ENCODE measurements at regions of chr7 and their contacts with region 1.

Region 1: DNA sequence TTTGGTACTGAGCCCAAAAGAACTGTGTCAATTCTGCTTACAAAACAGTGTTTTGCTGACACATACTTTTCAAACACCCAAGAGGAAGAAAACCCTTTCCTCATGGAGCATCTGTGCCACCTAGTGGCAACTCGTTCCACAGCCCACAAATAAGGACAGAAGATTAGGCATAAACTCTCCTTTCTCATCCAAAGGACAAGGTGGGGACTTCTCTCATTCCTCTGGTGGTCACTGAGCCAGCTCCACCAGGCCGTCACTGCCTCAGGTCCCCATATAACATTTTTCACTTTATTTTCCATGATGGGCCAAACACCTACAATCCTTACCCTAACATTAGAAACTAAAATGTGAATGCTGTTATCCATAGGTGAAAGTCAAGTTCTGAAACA is 76.9 kb downstream of the RNF216 start:
- DNase-seq: peak; percentile 74 to 79 (median 77)
- H3K4me3 ChIP-seq: no peak overlapping the region
- H3K4me3 Mint-ChIP-seq: no peak overlapping the region
- H3K27ac ChIP-seq: no peak overlapping the region
- H3K27ac Mint-ChIP-seq: peak overlapping the region in 3 of 7 donors; percentile 19 to 68 (median 32)
- H3K4me1 ChIP-seq: peaks cover 33% of the 10 kb centered on the region
- H3K4me1 Mint-ChIP-seq: peaks cover 27 to 37% (median 32%) of the 10 kb centered on the region in 4 donors
- H3K27me3 ChIP-seq: no peaks in the 10 kb centered on the region
- H3K27me3 Mint-ChIP-seq: no peaks in the 10 kb centered on the region

Region 2: DNA sequence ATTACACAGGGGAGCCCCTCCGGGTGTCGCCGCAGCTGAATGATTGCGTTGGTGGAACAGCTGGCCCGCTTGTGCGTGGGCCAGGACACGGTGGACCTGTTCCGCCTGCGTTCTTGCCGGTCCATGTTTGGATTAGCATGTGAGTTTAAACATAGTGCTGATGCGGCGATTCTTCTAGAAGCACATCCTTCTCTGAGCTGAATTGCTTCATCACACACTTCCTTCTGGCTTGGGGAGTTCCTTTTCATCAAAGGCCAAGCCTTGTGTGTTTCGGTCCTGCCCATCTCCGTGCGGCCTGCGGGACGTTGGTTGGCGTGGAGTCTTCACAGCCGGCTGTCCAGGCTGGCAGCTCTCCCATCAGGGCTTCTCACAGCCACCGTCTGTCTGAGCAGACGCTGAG is 467.2 kb before region 1 on chr7:
- CTCF ChIA-PET with region 1: interaction called, 4 read pairs
- POLR2A ChIA-PET with region 1: no interaction called
- intact Hi-C with region 1: loop called (anchors 1 kb)
- DNase-seq: no peak
- H3K4me3 ChIP-seq: no peak overlapping the region
- H3K4me3 Mint-ChIP-seq: no peak overlapping the region
- H3K27ac ChIP-seq: no peak overlapping the region
- H3K27ac Mint-ChIP-seq: no peak overlapping the region
- H3K4me1 ChIP-seq: peaks cover 13% of the 10 kb centered on the region
- H3K4me1 Mint-ChIP-seq: peaks cover 4 to 12% (median 6%) of the 10 kb centered on the region in 4 donors
- H3K27me3 ChIP-seq: no peaks in the 10 kb centered on the region
- H3K27me3 Mint-ChIP-seq: peaks cover 9 to 10% of the 10 kb centered on the region in 2 donors

Region 3: GRCh38 chr7:5494683-5495561 is 209.6 kb before region 1 on chr7:
- CTCF ChIA-PET with region 1: interaction called, 69 read pairs
- POLR2A ChIA-PET with region 1: interaction called, 9 read pairs
- intact Hi-C with region 1: loop called (anchors 1 kb)
- DNase-seq: peak; percentile 80 to 82 (median 81)
- H3K4me3 ChIP-seq: peak overlapping the region in 1 of 2 donors; percentile 40
- H3K4me3 Mint-ChIP-seq: peak overlapping the region in 7 of 8 donors; percentile 46 to 73 (median 53)
- H3K27ac ChIP-seq: no peak overlapping the region
- H3K27ac Mint-ChIP-seq: peak overlapping the region in 5 of 7 donors; percentile 15 to 86 (median 63)
- H3K4me1 ChIP-seq: peaks cover 16% of the 10 kb centered on the region
- H3K4me1 Mint-ChIP-seq: peaks cover 5 to 27% (median 15%) of the 10 kb centered on the region in 4 donors
- H3K27me3 ChIP-seq: no peaks in the 10 kb centered on the region
- H3K27me3 Mint-ChIP-seq: no peaks in the 10 kb centered on the region

Region 4: DNA sequence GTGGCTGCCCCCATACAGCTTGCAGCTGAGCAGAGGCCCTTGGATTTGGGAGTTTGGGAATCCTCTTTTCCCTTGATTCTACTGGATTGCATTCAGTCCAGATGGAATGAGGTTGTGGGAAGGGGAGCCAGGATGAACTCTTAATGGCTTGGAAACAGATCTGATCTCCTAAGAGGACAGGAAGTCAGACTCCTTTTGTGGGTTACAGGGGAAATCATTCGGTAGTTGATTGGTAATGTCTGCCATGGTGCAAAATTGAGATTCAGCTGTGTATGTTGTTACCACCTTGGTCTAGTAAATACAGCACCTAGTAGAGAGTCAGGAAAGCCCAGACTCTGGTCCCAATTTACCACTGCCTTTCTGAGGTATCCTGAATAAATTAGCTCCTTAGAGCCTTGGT is 136.7 kb before region 1 on chr7:
- CTCF ChIA-PET with region 1: interaction called, 15 read pairs
- POLR2A ChIA-PET with region 1: no interaction called
- intact Hi-C with region 1: no loop called
- DNase-seq: peak in 2 of 5 donors; percentile 22 to 36
- H3K4me3 ChIP-seq: no peak overlapping the region
- H3K4me3 Mint-ChIP-seq: peak overlapping the region in 2 of 8 donors; percentile 10 to 30
- H3K27ac ChIP-seq: no peak overlapping the region
- H3K27ac Mint-ChIP-seq: peak overlapping the region in 2 of 7 donors; percentile 41 to 54
- H3K4me1 ChIP-seq: peaks cover 26% of the 10 kb centered on the region
- H3K4me1 Mint-ChIP-seq: peaks cover 17 to 34% (median 26%) of the 10 kb centered on the region in 4 donors
- H3K27me3 ChIP-seq: peaks cover 3% of the 10 kb centered on the region
- H3K27me3 Mint-ChIP-seq: peaks cover 3 to 6% of the 10 kb centered on the region in 2 donors

Region 5: GRCh38 chr7:5665094-5666025 is 39.2 kb before region 1 on chr7:
- CTCF ChIA-PET with region 1: interaction called, 100 read pairs
- POLR2A ChIA-PET with region 1: interaction called, 4 read pairs
- intact Hi-C with region 1: loop called (anchors 1 kb)
- DNase-seq: peak; percentile 61 to 70 (median 65)
- H3K4me3 ChIP-seq: no peak overlapping the region
- H3K4me3 Mint-ChIP-seq: peak overlapping the region in 1 of 8 donors; percentile 36
- H3K27ac ChIP-seq: no peak overlapping the region
- H3K27ac Mint-ChIP-seq: peak overlapping the region in 5 of 7 donors; percentile 0 to 55 (median 2)
- H3K4me1 ChIP-seq: peaks cover 17% of the 10 kb centered on the region
- H3K4me1 Mint-ChIP-seq: peaks cover 16 to 30% (median 20%) of the 10 kb centered on the region in 4 donors
- H3K27me3 ChIP-seq: no peaks in the 10 kb centered on the region
- H3K27me3 Mint-ChIP-seq: no peaks in the 10 kb centered on the region

Region 6: DNA sequence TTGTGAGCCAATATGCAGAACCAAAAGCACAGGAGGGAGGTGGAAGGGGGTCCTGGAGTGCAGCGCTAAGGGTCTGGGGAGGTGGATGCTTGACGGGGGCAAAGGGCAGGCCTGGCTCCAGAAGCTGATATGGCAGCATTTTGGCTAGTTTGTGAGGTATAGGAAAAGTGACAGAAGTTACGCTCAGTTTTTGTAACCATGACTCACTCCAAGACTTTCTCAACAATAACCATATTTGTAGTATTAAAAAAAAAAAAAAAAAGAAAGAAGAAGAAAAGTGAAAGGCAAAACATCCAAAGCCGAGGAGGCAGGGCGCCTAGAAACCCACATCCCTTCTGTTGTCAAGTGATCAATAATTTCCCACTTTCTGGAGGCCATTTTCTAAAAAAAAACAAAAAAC is 15.4 kb before region 1 on chr7:
- CTCF ChIA-PET with region 1: interaction called, 29 read pairs
- POLR2A ChIA-PET with region 1: interaction called, 66 read pairs
- intact Hi-C with region 1: loop called (anchors 1 kb)
- DNase-seq: peak; percentile 60 to 82 (median 76)
- H3K4me3 ChIP-seq: peak overlapping the region in 1 of 2 donors; percentile 34
- H3K4me3 Mint-ChIP-seq: peak overlapping the region; percentile 52 to 85 (median 72)
- H3K27ac ChIP-seq: peak overlapping the region; percentile 51
- H3K27ac Mint-ChIP-seq: peak overlapping the region; percentile 88 to 97 (median 94)
- H3K4me1 ChIP-seq: peaks cover 99% of the 10 kb centered on the region
- H3K4me1 Mint-ChIP-seq: peaks cover 56 to 91% (median 75%) of the 10 kb centered on the region in 4 donors
- H3K27me3 ChIP-seq: no peaks in the 10 kb centered on the region
- H3K27me3 Mint-ChIP-seq: no peaks in the 10 kb centered on the region

Measured in CD4-positive, alpha-beta memory T cell (primary cell).